Activated naive CD4-positive, alpha-beta T cell treated with anti-CD3 and anti-CD28 coated beads for 36 hours (primary cell): ENCODE measurements at regions of chr1 and their contacts with region 1.

Region 1: DNA sequence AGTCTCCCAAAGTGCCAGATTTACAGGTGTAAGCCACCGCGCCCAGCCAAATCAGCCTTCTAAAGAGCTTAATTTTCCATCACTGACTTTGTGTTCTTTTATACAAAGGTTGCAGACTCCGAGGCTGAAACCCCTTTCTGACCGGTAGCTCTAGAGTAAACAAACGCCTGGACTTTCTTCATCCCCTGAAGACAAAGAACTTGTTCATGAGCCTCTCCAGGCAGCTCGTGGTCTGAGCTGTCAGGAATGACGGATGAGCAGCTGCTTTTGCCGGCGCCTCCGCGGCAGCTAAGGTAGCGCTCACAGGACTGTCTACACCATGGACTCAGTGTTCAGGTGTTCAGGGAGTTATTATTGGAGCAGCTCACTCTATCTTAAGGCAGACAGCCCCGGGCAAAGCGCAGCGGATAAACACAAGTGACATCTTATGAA is 128.5 kb upstream of the ERRFI1 start:
- DNase-seq: no peak
- H3K4me3 Mint-ChIP-seq: no peak overlapping the region
- H3K27ac Mint-ChIP-seq: no peak overlapping the region
- H3K4me1 Mint-ChIP-seq: peaks cover 42% of the 10 kb centered on the region
- H3K27me3 Mint-ChIP-seq: peaks cover 7% of the 10 kb centered on the region

Region 2: GRCh38 chr1:7827126-7827955 is 327.3 kb before region 1 on chr1:
- CTCF ChIA-PET with region 1: no interaction called
- intact Hi-C with region 1: no loop called
- DNase-seq: peak; percentile 25
- H3K4me3 Mint-ChIP-seq: peak overlapping the region; percentile 86
- H3K27ac Mint-ChIP-seq: peak overlapping the region; percentile 87
- H3K4me1 Mint-ChIP-seq: no peaks in the 10 kb centered on the region
- H3K27me3 Mint-ChIP-seq: no peaks in the 10 kb centered on the region

Region 3: GRCh38 chr1:7948960-7949359 is 205.7 kb before region 1 on chr1:
- CTCF ChIA-PET with region 1: no interaction called
- intact Hi-C with region 1: loop called (anchors 5 kb)
- DNase-seq: peak; percentile 57
- H3K4me3 Mint-ChIP-seq: peak overlapping the region; percentile 15
- H3K27ac Mint-ChIP-seq: peak overlapping the region; percentile 68
- H3K4me1 Mint-ChIP-seq: peaks cover 26% of the 10 kb centered on the region
- H3K27me3 Mint-ChIP-seq: no peaks in the 10 kb centered on the region

Region 4: GRCh38 chr1:8169364-8170058 is 14.9 kb after region 1 on chr1:
- CTCF ChIA-PET with region 1: interaction called, 3 read pairs
- intact Hi-C with region 1: loop called (anchors 1 kb)
- DNase-seq: peak; percentile 72
- H3K4me3 Mint-ChIP-seq: peak overlapping the region; percentile 57
- H3K27ac Mint-ChIP-seq: peak overlapping the region; percentile 91
- H3K4me1 Mint-ChIP-seq: peaks cover 29% of the 10 kb centered on the region
- H3K27me3 Mint-ChIP-seq: no peaks in the 10 kb centered on the region

Region 5: DNA sequence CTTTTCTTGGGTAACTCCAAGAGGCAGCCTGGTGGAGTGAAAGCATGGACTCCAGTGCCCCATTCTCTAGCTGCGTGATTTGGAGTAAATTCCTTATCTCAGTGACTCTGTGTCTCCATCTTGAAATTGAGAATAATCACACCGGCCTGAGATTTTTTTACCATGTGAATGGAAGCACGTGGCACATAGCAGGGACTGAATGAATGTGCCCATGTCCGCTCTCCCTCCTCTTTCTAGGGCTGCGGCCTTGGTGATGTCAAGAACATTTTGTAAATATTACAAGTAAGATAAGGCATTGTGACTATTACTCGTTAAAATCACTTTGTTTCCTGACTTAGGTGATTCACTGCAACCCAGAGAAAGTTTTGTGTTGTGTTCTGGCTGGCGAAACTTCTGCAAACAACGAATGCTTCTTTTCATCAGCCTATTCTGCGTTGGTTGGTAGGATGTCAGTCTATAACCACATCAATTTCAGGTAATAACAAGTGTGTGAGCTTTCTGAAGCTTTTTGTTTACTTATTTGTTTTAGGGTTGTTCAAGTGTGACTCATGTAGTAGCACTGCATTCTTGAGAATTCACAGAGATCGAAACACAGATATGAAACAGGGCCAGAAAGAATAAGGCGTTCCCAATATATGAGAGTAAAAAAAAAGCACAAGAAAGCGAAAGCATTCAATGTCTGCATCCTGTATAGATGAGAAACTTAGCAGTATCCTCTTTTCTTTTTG is 27.6 kb after region 1 on chr1:
- CTCF ChIA-PET with region 1: interaction called, 3 read pairs
- intact Hi-C with region 1: loop called (anchors 1 kb)
- DNase-seq: no peak
- H3K4me3 Mint-ChIP-seq: no peak overlapping the region
- H3K27ac Mint-ChIP-seq: peak overlapping the region; percentile 70
- H3K4me1 Mint-ChIP-seq: peaks cover 17% of the 10 kb centered on the region
- H3K27me3 Mint-ChIP-seq: no peaks in the 10 kb centered on the region

Region 6: DNA sequence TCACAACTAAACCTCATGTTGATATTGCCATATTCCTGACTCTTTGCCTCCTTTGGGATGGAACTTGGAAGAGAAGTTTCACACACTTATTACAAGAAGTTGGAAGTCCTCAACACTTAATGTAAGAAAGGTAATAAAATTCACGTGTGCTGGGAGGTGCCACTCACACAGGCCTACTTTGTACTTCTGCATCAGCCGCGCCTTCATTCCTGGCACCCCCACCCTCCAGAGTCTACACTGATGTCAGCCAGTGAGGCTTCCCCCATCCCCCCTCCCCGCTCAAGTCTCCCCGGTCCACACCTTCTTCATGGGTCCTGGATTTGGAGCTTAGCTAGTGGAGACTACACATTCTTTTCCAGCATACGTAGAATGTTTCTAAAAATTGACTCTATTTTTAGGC is 138.5 kb after region 1 on chr1:
- CTCF ChIA-PET with region 1: no interaction called
- intact Hi-C with region 1: no loop called
- DNase-seq: no peak
- H3K4me3 Mint-ChIP-seq: no peak overlapping the region
- H3K27ac Mint-ChIP-seq: no peak overlapping the region
- H3K4me1 Mint-ChIP-seq: no peaks in the 10 kb centered on the region
- H3K27me3 Mint-ChIP-seq: no peaks in the 10 kb centered on the region